Ascending aorta (tissue), 2 donors: ENCODE measurements at regions of chr13 and their contacts with region 1.

Region 1: GRCh38 chr13:45464687-45465453 is at the start of gene COG3:
- DNase-seq: peak; percentile 80 to 97
- H3K4me3 ChIP-seq: peak within 1 kb of the TSS; percentile 63 to 94
- H3K27ac ChIP-seq: peak within 1 kb of the TSS; percentile 90 to 93
- H3K4me1 ChIP-seq: peaks cover 3 to 18% of the 10 kb centered on the region in 2 donors
- H3K27me3 ChIP-seq: no peaks in the 10 kb centered on the region
- CTCF ChIP-seq: peak in 1 of 3 experiments; percentile 37
- total RNA-seq, gene COG3: 5.7 TPM

Region 2: DNA sequence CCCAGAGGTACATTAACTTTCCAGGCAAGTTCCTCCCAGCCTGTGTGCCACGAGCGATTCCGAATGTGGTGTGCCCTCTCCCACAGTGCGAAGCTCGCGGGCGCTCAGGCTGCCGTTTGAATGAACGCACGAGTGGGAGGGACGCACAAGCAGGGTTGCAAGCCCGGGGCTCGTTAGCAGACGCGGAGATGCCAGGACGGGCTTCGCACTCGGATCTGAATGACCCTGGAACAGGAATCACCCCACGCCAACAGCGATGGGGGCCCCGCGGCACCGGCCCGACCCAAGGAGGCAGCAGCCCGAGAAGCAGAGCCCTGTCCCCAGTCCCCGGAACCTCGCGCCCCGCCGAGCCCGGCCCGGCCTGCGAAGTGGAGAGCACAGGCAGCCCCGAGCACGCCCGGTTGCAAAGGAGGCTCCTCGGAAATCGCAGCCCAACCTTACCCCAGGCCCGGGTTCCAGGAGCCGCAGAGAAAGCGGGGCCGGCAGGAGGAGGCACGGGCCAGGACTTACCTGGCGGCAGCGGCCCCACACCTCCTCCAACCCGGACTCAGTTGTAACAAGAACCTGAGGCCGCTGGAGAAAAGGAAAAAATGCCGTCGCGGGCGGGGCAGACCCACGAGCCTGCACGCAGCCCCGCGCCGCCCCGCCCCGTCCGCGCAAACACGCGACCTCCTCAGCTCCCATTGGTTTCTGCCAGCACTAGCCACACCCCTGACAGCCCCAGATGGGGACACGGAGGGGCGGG is 46.9 kb before region 1 on chr13 and contains the start of gene SLC25A30:
- intact Hi-C with region 1: loop called (anchors 1 kb)
- DNase-seq: peak; percentile 87 to 97
- H3K4me3 ChIP-seq: peak within 1 kb of the TSS; percentile 70 to 80
- H3K27ac ChIP-seq: peak within 1 kb of the TSS; percentile 83 to 85
- H3K4me1 ChIP-seq: peaks cover 0 to 7% of the 10 kb centered on the region in 2 donors
- H3K27me3 ChIP-seq: no peaks in the 10 kb centered on the region
- CTCF ChIP-seq: no peak
- total RNA-seq, gene SLC25A30: 1.9 TPM

Region 3: DNA sequence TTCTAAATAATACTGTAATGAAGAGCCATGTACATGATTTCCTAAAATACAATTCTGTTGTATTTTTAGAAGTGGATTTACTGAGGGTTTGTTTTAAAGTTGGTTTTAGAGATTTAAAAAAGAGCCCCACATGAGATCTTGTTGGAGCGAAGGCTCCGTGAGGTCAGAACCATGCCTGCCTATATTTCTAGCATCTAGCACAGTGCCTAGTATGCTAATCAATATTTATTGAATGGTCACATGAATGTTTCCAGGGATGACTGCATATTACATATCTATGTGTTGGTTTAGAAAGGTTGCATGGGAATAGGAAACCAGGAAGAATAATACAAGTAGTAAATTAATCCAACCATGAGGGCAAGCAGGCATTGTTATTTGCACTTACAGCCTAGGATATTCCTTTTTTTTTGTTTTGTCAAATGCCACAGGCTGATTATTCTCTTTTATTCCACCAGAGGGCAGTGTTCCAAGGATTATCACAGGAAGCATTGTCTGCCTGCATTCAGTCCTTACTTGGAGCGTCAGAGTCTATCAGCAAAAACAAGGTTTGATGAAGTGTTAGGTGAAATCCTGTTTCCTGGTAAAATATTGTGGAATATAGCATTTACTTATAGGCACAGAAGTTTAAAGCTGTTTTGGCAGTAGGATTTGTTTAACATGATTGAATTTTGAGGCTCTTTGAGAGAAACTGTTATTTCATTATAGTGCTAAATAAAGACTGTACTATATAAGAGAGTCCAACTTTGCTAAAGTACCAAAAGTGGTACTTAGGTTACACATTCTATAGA is 46.6 kb after region 1 on chr13:
- intact Hi-C with region 1: loop called (anchors 5 kb)
- DNase-seq: no peak
- H3K4me3 ChIP-seq: no peak overlapping the region
- H3K27ac ChIP-seq: peak overlapping the region in 1 of 2 donors; percentile 43
- H3K4me1 ChIP-seq: no peaks in the 10 kb centered on the region
- H3K27me3 ChIP-seq: no peaks in the 10 kb centered on the region
- CTCF ChIP-seq: peak; percentile 70 to 77 (median 74)